OCI-LY7 (cell line): ENCODE measurements at regions of chr1 and their contacts with region 1.

Region 1: DNA sequence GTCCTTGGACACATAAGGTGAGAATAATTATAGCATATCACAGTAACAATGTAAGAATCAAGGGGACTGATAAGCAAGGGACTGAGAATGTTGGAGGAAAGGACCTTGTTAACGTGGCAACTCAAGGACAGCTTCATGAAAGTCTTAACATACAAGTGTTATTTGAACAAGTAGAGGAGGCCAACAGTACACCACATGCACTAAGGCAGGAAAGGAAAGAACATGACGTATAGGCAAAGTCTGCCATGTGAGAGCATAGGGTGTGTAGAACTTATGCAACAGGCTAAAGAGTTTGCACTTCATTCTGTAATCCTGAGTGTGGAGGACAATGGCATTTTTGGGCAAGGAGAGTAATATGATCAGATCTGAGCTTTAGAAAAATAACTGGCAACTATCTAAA is 33.3 kb upstream of the DIRAS3 start:
- DNase-seq: no peak
- H3K4me3 ChIP-seq: no peak overlapping the region
- H3K27ac ChIP-seq: no peak overlapping the region
- H3K4me1 ChIP-seq: no peaks in the 10 kb centered on the region
- CTCF ChIP-seq: no peak

Region 2: GRCh38 chr1:68093737-68094136 is 10.1 kb after region 1 on chr1:
- CTCF ChIA-PET with region 1: no interaction called
- POLR2A ChIA-PET with region 1: interaction called, 11 read pairs
- intact Hi-C with region 1: no loop called
- DNase-seq: no peak
- H3K4me3 ChIP-seq: no peak overlapping the region
- H3K27ac ChIP-seq: no peak overlapping the region
- H3K4me1 ChIP-seq: no peaks in the 10 kb centered on the region
- CTCF ChIP-seq: no peak

Region 3: GRCh38 chr1:68276431-68276830 is 192.7 kb after region 1 on chr1:
- CTCF ChIA-PET with region 1: no interaction called
- POLR2A ChIA-PET with region 1: no interaction called
- intact Hi-C with region 1: no loop called
- DNase-seq: no peak
- H3K4me3 ChIP-seq: no peak overlapping the region
- H3K27ac ChIP-seq: no peak overlapping the region
- H3K4me1 ChIP-seq: no peaks in the 10 kb centered on the region
- CTCF ChIP-seq: no peak